PC-9 (cell line): ENCODE measurements at regions of chr2 and their contacts with region 1.

Region 1: GRCh38 chr2:201490291-201490690 is 38.8 kb downstream of the STRADB start:
- DNase-seq: no peak
- H3K4me3 ChIP-seq: no peak overlapping the region
- H3K27ac ChIP-seq: no peak overlapping the region
- H3K4me1 ChIP-seq: no peaks in the 10 kb centered on the region
- H3K27me3 ChIP-seq: no peaks in the 10 kb centered on the region
- CTCF ChIP-seq: no peak

Region 2: GRCh38 chr2:201900362-201900761 is 410.1 kb after region 1 on chr2:
- CTCF ChIA-PET with region 1: no interaction called
- POLR2A ChIA-PET with region 1: interaction called, 17 read pairs
- intact Hi-C with region 1: no loop called
- DNase-seq: peak in 1 of 2 experiments; percentile 71
- H3K4me3 ChIP-seq: no peak overlapping the region
- H3K27ac ChIP-seq: no peak overlapping the region
- H3K4me1 ChIP-seq: no peaks in the 10 kb centered on the region; the same call in 1 of the 2 replicates
- H3K27me3 ChIP-seq: no peaks in the 10 kb centered on the region
- CTCF ChIP-seq: no peak